ENCODE measurements at regions of chr5 and their contacts with region 1.

Region 1: DNA sequence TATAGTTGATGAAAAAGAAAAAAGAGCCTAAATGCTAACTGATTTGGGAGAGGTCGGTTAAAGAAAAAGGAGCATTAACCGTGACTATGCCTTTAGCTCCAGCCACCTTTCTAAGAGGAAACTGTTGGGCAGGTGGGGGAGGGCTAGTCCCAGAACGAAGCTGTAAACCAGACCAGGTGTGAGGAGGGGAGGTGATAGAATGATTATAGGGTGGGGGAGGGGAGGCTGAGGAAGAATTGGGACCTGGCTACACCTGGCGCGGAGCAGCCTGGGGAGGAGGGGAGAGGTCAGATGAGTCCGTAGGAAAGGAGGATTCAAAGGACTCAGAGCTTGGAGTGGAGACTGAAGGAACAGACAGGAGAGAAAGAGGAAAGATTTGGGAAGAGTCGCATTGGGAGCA is 73.4 kb downstream of the PHAX start:
- DNase-seq: no peak
- H3K4me3 ChIP-seq: no peak overlapping the region
- H3K27ac ChIP-seq: no peak overlapping the region
- H3K4me1 ChIP-seq: no peaks in the 10 kb centered on the region
- H3K27me3 ChIP-seq: no peaks in the 10 kb centered on the region
- CTCF ChIP-seq: no peak
- POLR2A ChIP-seq: no peak

Region 2: GRCh38 chr5:126600631-126601511 is 73.3 kb before region 1 on chr5 and contains the start of gene PHAX:
- intact Hi-C with region 1: no loop called
- DNase-seq: peak; percentile 57 to 79
- H3K4me3 ChIP-seq: peak within 1 kb of the TSS; percentile 79 to 99
- H3K27ac ChIP-seq: peak within 1 kb of the TSS; percentile 86 to 87
- H3K4me1 ChIP-seq: peaks cover 9 to 13% of the 10 kb centered on the region in 2 donors
- H3K27me3 ChIP-seq: no peaks in the 10 kb centered on the region
- CTCF ChIP-seq: peak; percentile 67 to 81 (median 76)
- POLR2A ChIP-seq: peak in 1 of 2 donors; percentile 32
- total RNA-seq, gene PHAX: 31.0 to 82.7 (median 72.9) TPM

Region 3: DNA sequence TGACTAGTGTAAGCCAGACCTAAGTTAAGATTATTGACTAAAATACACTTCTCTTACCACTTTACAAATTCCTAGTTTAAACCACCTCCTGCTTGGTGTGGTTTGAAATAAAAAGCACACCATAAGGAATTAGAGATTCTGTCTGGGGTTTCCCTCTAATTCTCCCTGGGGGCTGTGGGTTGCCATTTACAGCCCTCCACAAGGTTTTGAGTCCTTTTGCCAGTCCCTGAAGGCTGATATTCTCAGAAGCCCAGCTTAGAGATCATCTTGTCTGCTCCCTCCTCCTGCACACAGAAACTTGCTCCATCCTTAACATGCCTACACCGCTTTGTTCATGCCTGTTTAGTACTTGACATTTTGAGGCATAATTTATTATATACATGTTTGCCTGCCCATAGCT is 95.6 kb after region 1 on chr5:
- intact Hi-C with region 1: loop called (anchors 5 kb)
- DNase-seq: no peak
- H3K4me3 ChIP-seq: no peak overlapping the region
- H3K27ac ChIP-seq: no peak overlapping the region
- H3K4me1 ChIP-seq: no peaks in the 10 kb centered on the region
- H3K27me3 ChIP-seq: no peaks in the 10 kb centered on the region
- CTCF ChIP-seq: no peak
- POLR2A ChIP-seq: no peak